GM12878 (cell line): ENCODE measurements at regions of chr12 and their contacts with region 1.

Region 1: DNA sequence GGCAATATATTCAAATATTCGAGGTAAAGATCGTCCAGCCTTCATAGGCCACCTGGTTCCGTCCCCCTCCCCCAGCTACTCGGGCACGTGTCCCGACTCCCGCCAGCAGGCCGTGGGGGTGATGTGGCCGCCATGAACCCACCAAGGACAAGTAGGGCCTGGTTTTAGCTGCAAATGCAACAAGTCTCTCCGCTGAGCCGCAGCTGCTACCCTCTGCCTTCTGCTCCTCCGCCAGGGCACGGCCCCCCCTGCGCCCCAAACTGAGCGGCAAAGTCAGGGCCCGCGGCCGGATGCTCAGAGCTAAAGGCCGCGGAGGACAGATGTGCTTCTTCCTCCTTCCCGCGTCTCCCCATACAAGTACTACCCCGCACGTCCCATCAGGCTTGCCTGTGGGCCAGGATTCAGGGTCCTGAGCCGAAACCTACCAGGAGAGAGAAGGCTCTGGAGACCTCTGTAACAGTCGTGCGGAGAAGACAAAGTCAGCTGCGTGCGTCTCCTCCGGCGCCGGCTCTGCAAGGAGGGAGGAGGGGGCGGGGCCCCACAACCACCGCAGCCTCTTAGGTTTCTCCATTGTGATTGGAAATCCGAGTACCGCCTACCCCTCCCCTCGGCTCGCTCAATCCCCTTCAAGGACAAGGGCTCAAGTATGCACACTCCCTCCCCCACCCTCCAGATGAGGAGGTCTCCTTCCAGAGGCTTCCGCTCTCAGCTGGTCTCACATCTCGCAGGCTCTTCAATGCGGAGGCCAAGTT is at the start of gene LDHB:
- DNase-seq: peak; percentile 81
- ATAC-seq: peak; percentile 96
- H3K4me3 ChIP-seq: peak within 1 kb of the TSS; percentile 91
- H3K27ac ChIP-seq: peak within 1 kb of the TSS; percentile 87
- H3K4me1 ChIP-seq: no peaks in the 10 kb centered on the region; the same call in none of the 2 replicates
- H3K27me3 ChIP-seq: no peaks in the 10 kb centered on the region; a peak in 1 of 4 replicates
- CTCF ChIP-seq: no peak
- EP300 ChIP-seq: no peak
- POLR2A ChIP-seq: peak; percentile 96
- RAD21 ChIP-seq: no peak
- polyA plus RNA-seq, gene LDHB: 3,645 to 3,692 TPM

Region 2: DNA sequence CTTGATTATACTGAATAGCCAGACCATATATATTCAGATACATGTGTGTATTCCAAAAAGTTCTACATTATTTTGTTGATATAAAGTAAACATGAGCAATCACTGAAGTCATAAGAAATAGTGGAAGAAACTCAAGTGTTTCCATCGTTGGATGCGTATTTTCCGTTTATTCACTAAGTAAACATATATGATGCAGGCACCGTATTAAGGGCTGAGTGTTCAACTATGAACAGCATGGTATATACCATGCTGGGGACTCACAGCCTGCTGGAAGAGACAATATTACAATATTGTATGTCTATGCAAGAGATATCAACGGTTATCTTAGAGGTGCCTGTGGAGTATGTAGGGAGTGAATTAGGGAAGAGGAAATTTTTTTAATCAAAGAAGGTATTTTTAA is 218.9 kb before region 1 on chr12:
- CTCF ChIA-PET with region 1: no interaction called
- POLR2A ChIA-PET with region 1: interaction called, 3 read pairs
- RAD21 ChIA-PET with region 1: interaction called, 3 read pairs
- SMC1A ChIA-PET with region 1: no interaction called
- in situ Hi-C with region 1: loop called (anchors 10 kb)
- intact Hi-C with region 1: loop called (anchors 5 kb)
- DNase-seq: no peak
- ATAC-seq: 0 out of 3 replicates have a peak, but pooled peaks have one; percentile 6
- H3K4me3 ChIP-seq: peak overlapping the region; percentile 88
- H3K27ac ChIP-seq: peak overlapping the region; percentile 86
- H3K4me1 ChIP-seq: no peaks in the 10 kb centered on the region
- H3K27me3 ChIP-seq: no peaks in the 10 kb centered on the region
- CTCF ChIP-seq: no peak
- EP300 ChIP-seq: no peak
- POLR2A ChIP-seq: no peak
- RAD21 ChIP-seq: no peak

Region 3: GRCh38 chr12:21444193-21445146 is 213.0 kb before region 1 on chr12:
- CTCF ChIA-PET with region 1: no interaction called
- POLR2A ChIA-PET with region 1: no interaction called
- RAD21 ChIA-PET with region 1: no interaction called
- SMC1A ChIA-PET with region 1: no interaction called
- in situ Hi-C with region 1: loop called (anchors 10 kb)
- intact Hi-C with region 1: loop called (anchors 5 kb)
- DNase-seq: no peak
- ATAC-seq: no peak
- H3K4me3 ChIP-seq: no peak overlapping the region
- H3K27ac ChIP-seq: no peak overlapping the region
- H3K4me1 ChIP-seq: no peaks in the 10 kb centered on the region
- H3K27me3 ChIP-seq: no peaks in the 10 kb centered on the region
- CTCF ChIP-seq: no peak
- EP300 ChIP-seq: no peak
- POLR2A ChIP-seq: no peak
- RAD21 ChIP-seq: no peak

Region 4: GRCh38 chr12:21501379-21501956 is 156.0 kb before region 1 on chr12 and contains the starts of genes GOLT1B and RECQL:
- CTCF ChIA-PET with region 1: no interaction called
- POLR2A ChIA-PET with region 1: interaction called, 3 read pairs
- RAD21 ChIA-PET with region 1: no interaction called
- SMC1A ChIA-PET with region 1: interaction called, 4 read pairs
- in situ Hi-C with region 1: loop called (anchors 5 kb)
- intact Hi-C with region 1: loop called (anchors 5 kb)
- DNase-seq: peak; percentile 98
- ATAC-seq: peak; percentile 96
- H3K4me3 ChIP-seq: peak within 1 kb of the TSS; percentile 94
- H3K27ac ChIP-seq: peak within 1 kb of the TSS; percentile 64
- H3K4me1 ChIP-seq: peaks cover 9% of the 10 kb centered on the region
- H3K27me3 ChIP-seq: no peaks in the 10 kb centered on the region
- CTCF ChIP-seq: no peak
- EP300 ChIP-seq: no peak
- POLR2A ChIP-seq: peak; percentile 87
- RAD21 ChIP-seq: no peak
- polyA plus RNA-seq, gene GOLT1B: 60.0 to 77.4 TPM
- polyA plus RNA-seq, gene RECQL: 59.4 to 76.5 TPM

Region 5: DNA sequence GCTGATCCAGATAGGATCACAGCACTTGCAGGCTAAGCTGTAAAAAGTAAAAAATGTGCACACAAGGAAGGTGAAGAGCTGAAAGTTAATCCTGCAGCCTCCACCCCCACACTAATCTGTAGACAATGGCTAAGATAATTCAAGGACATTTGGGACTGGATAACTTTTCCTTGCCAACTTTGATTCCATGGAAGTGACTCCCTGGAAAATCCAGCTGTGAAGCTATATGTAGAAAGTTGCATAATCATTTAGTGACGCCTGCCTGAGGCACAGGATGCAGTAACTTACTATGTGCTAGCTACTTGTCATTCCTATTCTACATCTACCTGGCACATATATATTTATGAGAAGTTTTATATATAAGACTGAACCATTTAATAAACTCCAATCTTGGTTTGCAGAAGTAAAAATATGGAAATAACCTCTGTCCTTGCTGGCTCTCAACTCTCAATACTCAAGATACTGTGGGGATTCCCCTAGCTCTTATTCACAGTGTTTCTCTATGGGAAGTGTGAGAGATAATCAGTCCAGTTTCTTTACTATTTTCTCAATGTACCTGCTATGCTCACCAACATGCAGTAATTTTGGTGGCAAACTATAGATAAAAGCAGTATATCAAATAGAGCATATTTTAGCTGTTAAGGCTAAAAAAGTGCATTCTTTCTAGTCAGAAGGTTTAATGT is 14.7 kb before region 1 on chr12:
- CTCF ChIA-PET with region 1: interaction called, 3 read pairs
- POLR2A ChIA-PET with region 1: interaction called, 6 read pairs
- RAD21 ChIA-PET with region 1: interaction called, 5 read pairs
- SMC1A ChIA-PET with region 1: interaction called, 19 read pairs
- in situ Hi-C with region 1: no loop called
- intact Hi-C with region 1: loop called (anchors 2 kb)
- DNase-seq: no peak
- ATAC-seq: peak; percentile 82
- H3K4me3 ChIP-seq: no peak overlapping the region
- H3K27ac ChIP-seq: no peak overlapping the region
- H3K4me1 ChIP-seq: no peaks in the 10 kb centered on the region
- H3K27me3 ChIP-seq: no peaks in the 10 kb centered on the region
- CTCF ChIP-seq: no peak
- EP300 ChIP-seq: no peak
- POLR2A ChIP-seq: no peak
- RAD21 ChIP-seq: no peak